ENCODE measurements at regions of chr16 and their contacts with region 1.

Region 1: DNA sequence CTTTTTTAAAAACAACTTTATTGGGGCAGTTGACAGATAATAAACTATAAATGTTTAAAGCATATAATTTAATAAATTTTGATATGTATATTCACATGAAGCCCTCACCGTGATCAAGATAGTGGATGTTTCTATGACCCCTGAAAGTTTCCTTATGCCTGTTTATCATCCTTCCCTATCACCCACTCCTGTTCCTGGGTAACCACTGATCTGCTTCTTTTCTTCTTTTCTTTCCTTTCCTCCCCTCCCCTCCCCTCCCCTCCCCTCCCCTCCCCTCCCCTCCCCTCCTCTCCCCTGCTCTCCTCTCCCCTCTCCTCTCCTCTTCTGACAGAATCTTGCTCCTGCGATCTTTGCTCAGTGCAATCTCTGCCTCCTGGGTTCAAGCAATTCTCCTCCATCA is 193.7 kb upstream of the CDH13 start:
- DNase-seq: no peak
- H3K4me3 ChIP-seq: no peak overlapping the region
- H3K27ac ChIP-seq: no peak overlapping the region
- H3K27me3 ChIP-seq: no peaks in the 10 kb centered on the region
- CTCF ChIP-seq: no peak

Region 2: DNA sequence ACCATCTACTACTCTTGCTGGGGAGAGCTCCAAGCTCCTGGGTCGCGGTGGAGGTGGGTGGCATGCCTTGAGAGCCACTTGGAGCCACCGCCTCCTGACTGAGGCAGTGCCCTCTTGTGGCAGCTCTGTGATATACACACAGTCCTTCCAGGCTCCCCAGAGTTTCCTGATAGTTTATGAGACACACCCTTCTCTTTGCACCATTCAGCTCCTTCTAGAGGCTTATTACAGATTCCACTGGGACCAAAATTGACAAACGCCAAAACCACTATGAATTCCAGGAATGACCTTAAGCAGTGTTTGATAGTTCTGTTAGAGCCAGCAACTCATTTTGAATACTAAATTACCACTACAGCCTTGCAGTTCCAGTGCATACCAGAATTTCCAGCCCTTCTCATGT is 23.6 kb after region 1 on chr16:
- CTCF ChIA-PET with region 1: interaction called, 13 read pairs
- POLR2A ChIA-PET with region 1: no interaction called
- DNase-seq: no peak
- H3K4me3 ChIP-seq: no peak overlapping the region
- H3K27ac ChIP-seq: no peak overlapping the region
- H3K27me3 ChIP-seq: no peaks in the 10 kb centered on the region
- CTCF ChIP-seq: peak; percentile 72

Region 3: GRCh38 chr16:82470620-82471152 is 37.6 kb after region 1 on chr16:
- CTCF ChIA-PET with region 1: no interaction called
- POLR2A ChIA-PET with region 1: no interaction called
- DNase-seq: no peak
- H3K4me3 ChIP-seq: no peak overlapping the region
- H3K27ac ChIP-seq: no peak overlapping the region
- H3K27me3 ChIP-seq: peaks cover 5% of the 10 kb centered on the region
- CTCF ChIP-seq: no peak